Common myeloid progenitor, CD34-positive (primary cell): ENCODE measurements at regions of chr22 and their contacts with region 1.

Region 1: DNA sequence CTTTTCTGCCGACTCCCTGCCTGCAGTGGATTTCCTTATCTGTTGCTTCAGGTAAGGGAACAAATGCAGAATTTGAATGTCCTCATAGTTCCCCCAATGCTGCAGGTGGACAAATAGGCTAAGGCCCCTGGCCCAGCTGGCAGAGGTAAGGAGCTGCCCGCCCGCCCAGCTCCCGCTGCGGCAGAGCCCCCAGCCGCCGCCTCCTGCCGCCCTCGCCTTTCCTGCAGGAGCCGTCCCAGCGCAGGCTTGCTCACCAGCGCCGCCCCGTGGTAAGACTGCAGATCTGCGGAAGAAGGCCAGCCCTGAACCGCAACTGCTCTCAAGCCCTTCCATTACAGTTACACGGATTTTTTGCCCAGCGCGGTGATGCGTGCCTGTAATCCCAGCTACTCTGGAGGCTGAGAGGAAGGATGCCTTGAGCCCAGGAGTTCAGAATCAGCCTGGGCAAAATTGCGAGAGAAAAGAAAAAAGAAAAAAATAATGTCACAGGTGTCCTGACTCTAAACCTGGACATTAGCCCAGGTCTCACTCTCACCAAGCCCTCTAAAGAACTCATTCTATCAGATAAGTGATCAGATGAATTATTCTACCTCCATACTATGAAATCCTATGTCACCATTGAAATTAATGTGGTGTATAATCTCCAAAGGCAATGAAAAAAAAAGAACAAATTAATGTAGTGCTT is 51.2 kb upstream of the EMID1 start:
- DNase-seq: peak; percentile 62 to 82 (median 79)
- H3K4me3 ChIP-seq: peak overlapping the region in 6 of 7 experiments; percentile 30 to 67 (median 44)
- H3K27ac ChIP-seq: no peak overlapping the region
- H3K4me1 ChIP-seq: peaks cover 7 to 41% (median 30%) of the 10 kb centered on the region in 4 experiments
- H3K27me3 ChIP-seq: no peaks in the 10 kb centered on the region

Region 2: GRCh38 chr22:29143941-29144785 is 10.3 kb before region 1 on chr22:
- CTCF ChIA-PET with region 1: interaction called, 22 read pairs
- POLR2A ChIA-PET with region 1: no interaction called
- DNase-seq: peak in 1 of 3 donors; percentile 26
- H3K4me3 ChIP-seq: no peak overlapping the region
- H3K27ac ChIP-seq: no peak overlapping the region
- H3K4me1 ChIP-seq: peaks cover 0 to 27% (median 12%) of the 10 kb centered on the region in 4 experiments
- H3K27me3 ChIP-seq: no peaks in the 10 kb centered on the region

Region 3: GRCh38 chr22:29167032-29167911 is 12.8 kb after region 1 on chr22:
- CTCF ChIA-PET with region 1: interaction called, 23 read pairs
- POLR2A ChIA-PET with region 1: no interaction called
- DNase-seq: peak; percentile 94 to 99 (median 98)
- H3K4me3 ChIP-seq: peak overlapping the region in 3 of 7 experiments; percentile 6 to 39 (median 22)
- H3K27ac ChIP-seq: peak overlapping the region in 1 of 2 experiments; percentile 6
- H3K4me1 ChIP-seq: peaks cover 4 to 34% (median 28%) of the 10 kb centered on the region in 4 experiments
- H3K27me3 ChIP-seq: no peaks in the 10 kb centered on the region

Region 4: DNA sequence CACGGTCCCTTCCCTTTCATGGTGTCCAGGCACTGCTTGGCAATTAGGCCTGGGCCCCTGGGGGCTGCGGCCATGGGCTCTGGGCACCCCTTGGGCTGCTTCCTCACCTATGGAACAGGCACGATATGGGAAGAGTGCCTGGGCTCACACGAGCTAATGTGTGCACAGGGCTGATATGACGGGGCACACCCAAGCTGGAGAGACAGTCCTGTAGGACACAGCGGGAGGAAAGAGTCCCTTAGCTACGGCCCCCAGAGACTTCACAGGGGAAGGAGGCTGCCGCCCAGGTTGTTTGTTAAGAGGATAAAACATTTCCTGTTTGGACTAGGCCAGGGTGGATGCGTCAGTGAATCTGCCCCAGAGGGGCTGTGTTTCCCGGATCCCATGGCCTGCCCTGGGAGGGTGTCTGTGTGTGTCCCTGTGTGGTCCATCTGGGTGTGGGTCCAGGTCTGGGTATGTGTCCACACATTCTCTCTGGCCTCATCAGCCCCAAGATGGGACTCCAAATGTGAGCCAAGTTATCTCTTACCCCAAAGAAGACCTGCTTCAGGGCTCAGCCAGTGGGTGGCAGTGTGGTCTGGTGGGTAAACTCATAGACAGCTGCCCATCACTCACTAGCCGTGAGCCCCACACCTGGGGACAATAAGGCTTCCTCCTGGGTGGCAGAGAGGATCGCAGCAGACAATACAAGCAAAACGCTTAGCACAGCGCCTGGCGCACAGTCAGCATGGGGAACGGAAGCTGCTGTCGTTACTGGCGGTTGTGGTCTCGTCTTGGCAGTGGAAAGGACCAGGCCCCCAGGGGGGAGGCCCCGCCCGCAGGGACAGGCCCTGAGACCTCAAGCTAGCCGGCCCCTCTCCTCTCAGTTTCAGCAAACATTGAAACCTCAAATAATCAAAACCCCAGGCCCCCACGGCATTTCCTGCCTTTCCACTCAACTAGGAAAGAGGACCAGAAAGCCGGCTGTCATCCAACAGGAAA is 48.0 kb after region 1 on chr22:
- CTCF ChIA-PET with region 1: interaction called, 69 read pairs
- POLR2A ChIA-PET with region 1: interaction called, 4 read pairs
- DNase-seq: peak; percentile 88 to 97 (median 96)
- H3K4me3 ChIP-seq: peak overlapping the region in 4 of 7 experiments; percentile 34 to 59 (median 44)
- H3K27ac ChIP-seq: peak overlapping the region; percentile 64 to 86
- H3K4me1 ChIP-seq: peaks cover 0 to 74% (median 70%) of the 10 kb centered on the region in 4 experiments
- H3K27me3 ChIP-seq: no peaks in the 10 kb centered on the region

Region 5: GRCh38 chr22:29208879-29209623 is 54.5 kb after region 1 on chr22:
- CTCF ChIA-PET with region 1: interaction called, 69 read pairs
- POLR2A ChIA-PET with region 1: interaction called, 4 read pairs
- DNase-seq: peak in 2 of 3 donors; percentile 80 to 88
- H3K4me3 ChIP-seq: peak overlapping the region in 4 of 7 experiments; percentile 29 to 85 (median 47)
- H3K27ac ChIP-seq: peak overlapping the region in 1 of 2 experiments; percentile 63
- H3K4me1 ChIP-seq: peaks cover 0 to 67% (median 55%) of the 10 kb centered on the region in 4 experiments
- H3K27me3 ChIP-seq: no peaks in the 10 kb centered on the region

Region 6: DNA sequence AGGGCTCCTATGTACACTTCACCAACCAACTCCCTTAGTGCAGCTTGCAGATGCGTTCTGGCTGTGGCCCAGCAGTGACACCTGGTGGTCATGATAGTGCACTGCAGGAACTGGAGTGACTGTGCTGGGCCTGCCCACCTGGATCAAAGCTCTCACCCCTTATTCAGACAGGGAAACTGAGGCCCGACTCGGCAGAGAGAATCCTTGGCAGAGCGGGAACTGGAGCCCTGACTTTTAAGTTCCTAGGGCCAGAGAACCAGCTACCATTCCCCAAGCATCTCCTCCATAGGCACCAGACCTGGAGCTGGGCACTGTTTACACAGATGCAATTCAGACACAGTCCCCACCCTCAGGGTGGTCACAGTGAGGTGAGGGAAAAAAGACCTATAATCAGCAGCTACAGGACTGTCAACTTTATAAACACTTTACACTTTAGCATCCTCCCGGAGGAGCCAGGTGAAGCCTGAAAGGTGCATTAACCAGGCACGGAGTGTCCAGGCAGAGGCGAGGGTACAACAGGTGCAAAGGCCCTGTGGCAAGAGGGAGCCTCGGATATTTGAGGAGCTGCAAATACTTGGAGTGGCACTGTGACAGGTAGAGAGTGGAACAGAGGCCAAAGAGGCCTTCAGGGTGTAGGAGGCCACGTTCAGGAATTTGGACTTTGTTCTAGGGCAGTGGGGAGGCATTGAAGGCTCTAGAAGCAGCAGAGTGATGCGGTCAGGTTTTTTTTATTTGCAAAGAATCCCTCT is 91.3 kb after region 1 on chr22:
- CTCF ChIA-PET with region 1: interaction called, 24 read pairs
- POLR2A ChIA-PET with region 1: no interaction called
- DNase-seq: peak; percentile 67 to 81 (median 79)
- H3K4me3 ChIP-seq: no peak overlapping the region
- H3K27ac ChIP-seq: no peak overlapping the region
- H3K4me1 ChIP-seq: peaks cover 0 to 9% (median 5%) of the 10 kb centered on the region in 4 experiments
- H3K27me3 ChIP-seq: no peaks in the 10 kb centered on the region

Region 7: DNA sequence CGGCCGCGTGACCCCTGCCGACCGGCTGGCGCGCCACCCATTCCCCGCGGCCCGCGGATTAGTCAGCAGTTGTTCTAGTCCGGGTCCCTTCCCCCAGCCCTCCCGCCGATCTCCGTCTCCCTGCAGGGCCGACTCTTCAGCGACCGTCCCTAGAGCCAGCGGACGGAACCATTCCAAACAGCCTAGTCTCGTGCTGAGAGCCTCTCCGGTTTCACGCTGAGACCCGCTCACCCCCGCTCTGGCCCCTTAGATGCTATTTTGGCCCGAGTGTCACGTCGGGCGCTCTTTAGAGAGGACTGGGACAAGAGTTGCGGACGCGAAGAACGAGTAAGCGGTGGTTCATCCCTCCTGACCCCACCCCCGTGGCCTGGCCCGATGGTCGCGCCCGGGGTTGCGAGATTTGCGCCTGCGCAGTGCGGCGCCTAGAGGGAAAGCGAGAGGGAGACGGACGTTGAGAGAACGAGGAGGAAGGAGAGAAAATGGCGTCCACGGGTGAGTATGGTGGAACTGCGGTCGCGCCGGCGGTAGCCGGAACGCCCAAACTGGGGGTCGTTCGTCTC is 113.4 kb after region 1 on chr22 and contains the starts of genes EWSR1 and RHBDD3:
- CTCF ChIA-PET with region 1: no interaction called
- POLR2A ChIA-PET with region 1: no interaction called
- DNase-seq: peak; percentile 97 to 99 (median 99)
- H3K4me3 ChIP-seq: peak within 1 kb of the TSS; percentile 72 to 95 (median 89)
- H3K27ac ChIP-seq: peak within 1 kb of the TSS; percentile 100
- H3K4me1 ChIP-seq: peaks cover 31 to 57% (median 40%) of the 10 kb centered on the region in 4 experiments
- H3K27me3 ChIP-seq: no peaks in the 10 kb centered on the region